ENCODE measurements at regions of chr22 and their contacts with region 1.

Region 1: GRCh38 chr22:46122511-46122971 is 27.8 kb upstream of the PPARA start:
- DNase-seq: peak; percentile 84
- ATAC-seq: peak; percentile 62 to 66

Region 2: GRCh38 chr22:45994491-45995404 is 127.8 kb before region 1 on chr22:
- intact Hi-C with region 1: no loop called
- DNase-seq: peak; percentile 85
- ATAC-seq: peak; percentile 37 to 49

Region 3: DNA sequence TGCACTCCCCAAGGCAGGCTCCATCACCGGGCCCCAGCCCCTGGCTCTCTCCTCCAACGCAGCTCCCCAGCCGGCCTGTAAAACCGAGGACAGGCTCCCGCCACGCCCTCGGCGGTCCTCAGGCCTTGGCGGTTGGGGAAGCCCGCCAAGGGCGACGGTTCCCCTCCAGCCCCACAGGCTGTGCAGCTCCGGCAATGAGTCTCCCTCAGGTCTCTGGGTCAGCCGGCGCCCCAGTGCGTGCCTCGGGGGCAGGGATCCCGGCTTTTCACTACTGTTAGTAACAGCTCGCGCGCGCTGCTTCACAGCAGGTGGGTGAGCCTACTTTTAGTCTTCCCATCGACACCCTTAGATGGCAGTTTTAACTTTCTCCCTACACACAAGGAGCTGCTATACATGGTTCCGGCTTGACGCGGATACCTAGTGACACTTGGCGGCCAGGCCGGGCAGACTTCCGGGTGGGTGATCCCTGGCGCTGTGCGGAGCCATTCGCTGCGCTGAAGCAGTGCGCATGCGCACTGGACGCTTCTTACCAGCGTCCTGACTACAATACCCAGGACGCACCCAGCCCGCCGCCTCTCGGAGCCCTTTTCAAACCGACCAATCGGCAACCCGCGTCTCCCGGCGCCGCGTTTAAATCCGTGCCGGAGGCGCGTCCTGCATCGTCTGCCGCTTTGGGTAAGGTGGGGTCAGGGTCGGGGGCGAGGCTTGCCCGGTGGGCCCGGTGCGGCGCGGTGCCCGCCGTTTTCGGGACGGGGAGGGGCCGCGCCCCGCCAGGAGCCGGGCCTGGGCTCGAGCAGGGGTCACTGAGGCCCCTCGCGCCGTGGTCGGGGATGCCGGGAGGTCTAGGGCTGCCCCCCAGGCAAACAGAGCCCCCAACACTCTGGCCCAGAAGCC is 174.0 kb after region 1 on chr22 and contains the start of gene GTSE1:
- intact Hi-C with region 1: loop called in 1 of 2 experiments (anchors 5 kb)
- DNase-seq: peak; percentile 99
- ATAC-seq: peak; percentile 97 to 99
- total RNA-seq, gene GTSE1: 0.24 to 0.94 TPM

Region 4: DNA sequence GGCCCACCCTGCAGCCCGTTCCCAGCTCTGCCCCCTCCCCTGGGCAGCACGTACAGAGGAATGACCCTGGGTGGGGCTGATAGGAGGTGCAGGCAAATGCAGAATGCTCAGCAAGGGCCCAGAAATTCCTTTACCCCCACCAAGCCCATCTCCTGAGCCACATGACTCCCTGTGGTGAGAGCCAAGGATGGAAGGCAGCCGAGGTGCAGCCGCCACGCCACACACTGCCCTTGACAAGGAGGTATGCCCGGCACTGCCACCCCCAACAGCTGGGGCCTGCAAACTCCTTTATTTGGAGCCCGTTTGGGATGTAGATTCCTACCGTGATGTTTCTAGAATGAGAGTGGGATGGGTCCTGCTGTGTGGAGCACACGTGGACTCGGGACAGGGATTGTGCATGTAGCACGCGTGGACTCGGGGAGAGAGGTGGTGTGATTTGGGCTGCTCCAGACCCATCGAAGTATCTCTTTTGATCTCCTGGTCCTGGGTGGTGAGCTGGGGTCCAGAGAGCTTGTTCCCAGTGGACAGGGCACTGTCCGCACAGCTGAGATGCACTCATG is 187.1 kb after region 1 on chr22:
- intact Hi-C with region 1: loop called (anchors 1 to 2 kb)
- DNase-seq: no peak
- ATAC-seq: peak; percentile 70 to 80

Region 5: GRCh38 chr22:46315976-46316375 is 193.4 kb after region 1 on chr22:
- intact Hi-C with region 1: loop called (anchors 1 to 2 kb)
- DNase-seq: no peak
- ATAC-seq: no peak

Measured in left cardiac atrium (tissue), 4 donors.